Natural killer cell (primary cell): ENCODE measurements at regions of chr12 and their contacts with region 1.

Region 1: GRCh38 chr12:6778574-6779550 is 6.5 kb downstream of the LAG3 start:
- DNase-seq: peak; percentile 79 to 94
- ATAC-seq: peak; percentile 93 to 99 (median 97)
- H3K4me3 ChIP-seq: peak overlapping the region; percentile 38
- H3K4me3 Mint-ChIP-seq: peak overlapping the region; percentile 89
- H3K27ac ChIP-seq: peak overlapping the region; percentile 28
- H3K27ac Mint-ChIP-seq: peak overlapping the region; percentile 24 to 67
- H3K4me1 ChIP-seq: peaks cover 34% of the 10 kb centered on the region
- H3K4me1 Mint-ChIP-seq: peaks cover 13 to 21% of the 10 kb centered on the region in 2 donors
- H3K27me3 ChIP-seq: peaks cover 17% of the 10 kb centered on the region
- H3K27me3 Mint-ChIP-seq: peaks cover 45 to 48% of the 10 kb centered on the region in 2 donors
- CTCF ChIP-seq: peak; percentile 93

Region 2: DNA sequence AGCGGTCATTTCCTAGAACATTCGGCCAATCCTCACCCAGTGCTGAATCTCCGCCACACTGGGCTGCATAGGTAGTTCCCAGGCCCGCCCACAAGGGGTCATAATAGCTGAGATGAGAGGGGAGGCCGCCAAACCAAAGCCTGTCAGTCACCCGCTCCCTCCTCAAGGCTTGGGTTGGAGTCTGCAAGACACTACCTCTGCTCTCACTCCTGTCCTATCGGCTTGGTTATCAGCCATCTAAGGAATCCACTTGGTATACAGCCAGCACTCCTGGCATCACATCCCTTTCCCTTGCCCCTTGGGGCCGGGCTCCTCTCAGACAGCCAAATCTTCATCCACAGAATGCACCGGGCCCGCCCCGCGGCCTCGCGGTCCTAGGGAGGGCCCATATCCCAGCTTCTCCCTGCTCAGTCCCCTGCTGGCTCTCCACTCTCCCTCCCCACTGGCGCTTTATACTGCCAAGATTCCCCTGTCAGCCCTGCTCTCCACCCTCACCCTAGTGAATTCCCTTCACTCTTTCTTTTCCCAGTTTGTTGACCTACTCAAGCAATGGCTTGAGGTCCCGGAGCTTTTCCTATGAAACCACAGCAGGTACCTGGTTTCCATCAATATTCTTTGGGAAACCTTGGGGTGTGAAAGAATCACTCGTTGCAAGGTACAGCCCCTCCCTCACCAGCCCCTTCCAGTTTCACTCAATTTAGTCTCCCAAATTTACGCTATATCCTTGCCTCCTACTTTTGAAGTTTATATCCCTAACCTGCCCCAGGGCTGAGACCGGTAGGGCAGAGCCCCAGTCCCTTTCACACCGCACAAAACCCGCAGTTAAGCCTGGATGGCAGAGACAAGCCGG is 224.5 kb before region 1 on chr12:
- intact Hi-C with region 1: loop called (anchors 2 kb)
- DNase-seq: peak; percentile 63 to 82
- ATAC-seq: peak; percentile 67 to 78 (median 69)
- H3K4me3 ChIP-seq: peak overlapping the region; percentile 51
- H3K4me3 Mint-ChIP-seq: peak overlapping the region; percentile 88
- H3K27ac ChIP-seq: no peak overlapping the region
- H3K27ac Mint-ChIP-seq: peak overlapping the region; percentile 34 to 77
- H3K4me1 ChIP-seq: peaks cover 63% of the 10 kb centered on the region
- H3K4me1 Mint-ChIP-seq: peaks cover 37 to 48% of the 10 kb centered on the region in 2 donors
- H3K27me3 ChIP-seq: no peaks in the 10 kb centered on the region
- H3K27me3 Mint-ChIP-seq: no peaks in the 10 kb centered on the region
- CTCF ChIP-seq: peak; percentile 59

Region 3: DNA sequence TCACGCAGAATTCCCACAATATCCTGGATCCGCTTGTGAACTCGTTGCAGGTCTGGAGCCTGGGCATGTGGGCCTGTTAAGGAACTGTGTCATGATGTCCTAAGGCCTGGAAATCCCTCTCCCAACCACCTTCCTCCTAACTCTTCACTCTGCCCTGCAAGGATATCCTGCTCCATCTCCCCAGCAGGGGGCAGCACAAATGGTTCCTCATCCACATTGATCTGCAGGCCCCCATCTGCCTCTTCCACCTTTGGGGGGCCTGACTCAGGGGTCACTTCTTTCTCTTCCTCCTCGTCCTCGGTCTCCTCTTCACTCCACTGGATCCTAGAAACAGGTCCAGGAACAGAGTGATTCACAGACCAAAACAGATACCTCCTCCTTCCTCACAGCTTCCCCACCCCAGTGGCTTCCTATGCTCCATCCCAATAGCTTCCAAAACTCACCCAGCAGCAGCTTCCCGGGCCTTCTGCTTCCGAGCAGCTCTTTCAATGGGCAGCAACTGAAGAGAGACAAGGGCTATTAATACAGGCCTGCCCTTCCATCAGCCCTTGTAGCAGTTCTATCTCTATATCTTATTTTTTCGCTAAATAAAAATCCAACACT is 215.3 kb before region 1 on chr12:
- intact Hi-C with region 1: loop called (anchors 2 kb)
- DNase-seq: peak; percentile 60 to 84
- ATAC-seq: peak; percentile 21 to 49 (median 25)
- H3K4me3 ChIP-seq: no peak overlapping the region
- H3K4me3 Mint-ChIP-seq: no peak overlapping the region
- H3K27ac ChIP-seq: no peak overlapping the region
- H3K27ac Mint-ChIP-seq: peak overlapping the region; percentile 19 to 50
- H3K4me1 ChIP-seq: peaks cover 8% of the 10 kb centered on the region
- H3K4me1 Mint-ChIP-seq: peaks cover 34% of the 10 kb centered on the region in 2 donors
- H3K27me3 ChIP-seq: no peaks in the 10 kb centered on the region
- H3K27me3 Mint-ChIP-seq: no peaks in the 10 kb centered on the region
- CTCF ChIP-seq: peak; percentile 86

Region 4: DNA sequence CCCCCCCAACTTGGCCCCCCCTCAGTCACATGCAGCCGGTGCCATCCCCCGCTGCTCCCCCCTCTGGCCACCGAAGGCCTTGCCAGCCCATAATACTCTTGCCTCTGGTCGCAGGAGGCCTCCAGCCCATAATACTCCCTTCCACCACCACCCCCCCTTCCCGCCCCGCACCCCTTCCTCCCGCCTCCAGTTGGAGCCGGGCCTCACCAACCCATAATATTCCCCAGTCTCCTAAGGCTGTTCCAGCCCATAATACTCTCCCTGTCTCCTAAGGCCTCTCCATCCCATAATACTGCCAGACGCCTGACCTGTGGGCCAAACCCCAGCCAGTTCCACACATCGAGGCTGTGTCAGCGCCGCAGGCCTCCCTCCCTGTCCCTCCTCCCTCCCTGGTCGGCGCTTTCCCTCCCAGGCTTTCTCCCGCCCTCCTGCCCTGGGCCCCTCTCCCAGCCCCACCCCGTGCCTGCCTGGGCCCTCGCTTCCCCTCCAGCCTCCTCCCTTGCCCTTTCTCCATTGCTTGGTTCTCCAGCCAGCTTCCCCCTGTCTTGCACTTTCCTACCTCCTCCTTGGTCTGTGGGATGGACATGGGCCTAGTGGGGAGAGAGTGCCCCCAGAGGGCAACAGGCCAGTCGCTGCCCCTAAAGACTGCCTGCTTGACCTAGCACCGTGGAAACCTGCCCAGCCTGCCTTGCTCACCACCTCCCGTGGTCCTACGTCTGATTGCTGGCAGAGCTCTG is 164.9 kb before region 1 on chr12:
- intact Hi-C with region 1: loop called (anchors 1 kb)
- DNase-seq: peak; percentile 72 to 82
- ATAC-seq: peak; percentile 73 to 83 (median 81)
- H3K4me3 ChIP-seq: peak overlapping the region; percentile 11
- H3K4me3 Mint-ChIP-seq: peak overlapping the region; percentile 72
- H3K27ac ChIP-seq: peak overlapping the region; percentile 89
- H3K27ac Mint-ChIP-seq: peak overlapping the region; percentile 90 to 94
- H3K4me1 ChIP-seq: peaks cover 39% of the 10 kb centered on the region
- H3K4me1 Mint-ChIP-seq: peaks cover 22 to 52% of the 10 kb centered on the region in 2 donors
- H3K27me3 ChIP-seq: no peaks in the 10 kb centered on the region
- H3K27me3 Mint-ChIP-seq: no peaks in the 10 kb centered on the region
- CTCF ChIP-seq: no peak

Region 5: GRCh38 chr12:6998708-6999451 is 220.0 kb after region 1 on chr12:
- intact Hi-C with region 1: no loop called
- DNase-seq: no peak
- ATAC-seq: no peak
- H3K4me3 ChIP-seq: no peak overlapping the region
- H3K4me3 Mint-ChIP-seq: no peak overlapping the region
- H3K27ac ChIP-seq: no peak overlapping the region
- H3K27ac Mint-ChIP-seq: no peak overlapping the region
- H3K4me1 ChIP-seq: no peaks in the 10 kb centered on the region
- H3K4me1 Mint-ChIP-seq: peaks cover 0 to 19% of the 10 kb centered on the region in 2 donors
- H3K27me3 ChIP-seq: no peaks in the 10 kb centered on the region
- H3K27me3 Mint-ChIP-seq: no peaks in the 10 kb centered on the region
- CTCF ChIP-seq: no peak